Activated CD8-positive, alpha-beta T cell treated with anti-CD3 and anti-CD28 coated beads, Interleukin-2, amount 10 ng/mL, durations not matched to agents 7 days and 5 days (primary cell): ENCODE measurements at regions of chr10 and their contacts with region 1.

Region 1: GRCh38 chr10:88901206-88901983 is 21.4 kb downstream of the STAMBPL1 start:
- DNase-seq: no peak
- ATAC-seq: peak; percentile 40
- H3K4me3 Mint-ChIP-seq: no peak overlapping the region
- H3K27ac Mint-ChIP-seq: peak overlapping the region; percentile 53
- H3K4me1 Mint-ChIP-seq: peaks cover 49% of the 10 kb centered on the region
- H3K27me3 Mint-ChIP-seq: no peaks in the 10 kb centered on the region

Region 2: DNA sequence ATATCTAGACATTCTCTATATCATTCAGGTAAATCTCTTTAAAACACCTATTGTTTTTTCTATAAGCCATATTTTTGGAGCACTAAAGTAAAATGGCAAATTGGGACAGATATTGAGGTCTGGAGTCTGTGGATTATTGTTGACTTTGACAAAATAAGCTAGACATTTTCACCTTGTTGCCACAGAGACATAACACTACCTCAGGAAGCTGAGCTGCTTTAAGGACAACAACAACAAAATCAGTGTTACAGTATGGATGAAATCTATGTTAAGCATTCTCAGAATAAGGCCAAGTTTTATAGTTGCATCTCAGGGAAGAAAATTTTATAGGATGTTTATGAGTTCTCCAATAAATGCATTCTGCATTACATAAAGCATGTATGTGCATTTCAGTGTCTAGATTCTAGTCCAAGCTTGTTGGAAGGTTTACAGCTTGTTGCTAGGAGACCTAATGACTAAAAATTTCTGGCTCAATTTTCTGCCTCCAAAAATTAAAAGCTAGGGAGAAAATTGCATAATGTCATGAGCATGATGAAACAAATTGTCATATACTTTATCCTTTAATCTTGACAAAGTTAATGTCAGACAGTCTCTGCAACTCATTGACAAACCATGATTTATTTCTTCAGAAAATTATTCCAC is 80.5 kb before region 1 on chr10:
- CTCF ChIA-PET with region 1: no interaction called
- POLR2A ChIA-PET with region 1: no interaction called
- DNase-seq: no peak
- ATAC-seq: no peak
- H3K4me3 Mint-ChIP-seq: no peak overlapping the region
- H3K27ac Mint-ChIP-seq: no peak overlapping the region
- H3K4me1 Mint-ChIP-seq: peaks cover 23% of the 10 kb centered on the region
- H3K27me3 Mint-ChIP-seq: no peaks in the 10 kb centered on the region

Region 3: GRCh38 chr10:88870089-88870488 is 31.3 kb before region 1 on chr10:
- CTCF ChIA-PET with region 1: no interaction called
- POLR2A ChIA-PET with region 1: no interaction called
- DNase-seq: no peak
- ATAC-seq: no peak
- H3K4me3 Mint-ChIP-seq: no peak overlapping the region
- H3K27ac Mint-ChIP-seq: no peak overlapping the region
- H3K4me1 Mint-ChIP-seq: peaks cover 2% of the 10 kb centered on the region
- H3K27me3 Mint-ChIP-seq: no peaks in the 10 kb centered on the region

Region 4: GRCh38 chr10:88880282-88881076 is 20.9 kb before region 1 on chr10:
- CTCF ChIA-PET with region 1: interaction called, 19 read pairs
- POLR2A ChIA-PET with region 1: interaction called, 24 read pairs
- DNase-seq: peak; percentile 87
- ATAC-seq: peak; percentile 81
- H3K4me3 Mint-ChIP-seq: peak overlapping the region; percentile 98
- H3K27ac Mint-ChIP-seq: peak overlapping the region; percentile 98
- H3K4me1 Mint-ChIP-seq: peaks cover 70% of the 10 kb centered on the region
- H3K27me3 Mint-ChIP-seq: no peaks in the 10 kb centered on the region

Region 5: DNA sequence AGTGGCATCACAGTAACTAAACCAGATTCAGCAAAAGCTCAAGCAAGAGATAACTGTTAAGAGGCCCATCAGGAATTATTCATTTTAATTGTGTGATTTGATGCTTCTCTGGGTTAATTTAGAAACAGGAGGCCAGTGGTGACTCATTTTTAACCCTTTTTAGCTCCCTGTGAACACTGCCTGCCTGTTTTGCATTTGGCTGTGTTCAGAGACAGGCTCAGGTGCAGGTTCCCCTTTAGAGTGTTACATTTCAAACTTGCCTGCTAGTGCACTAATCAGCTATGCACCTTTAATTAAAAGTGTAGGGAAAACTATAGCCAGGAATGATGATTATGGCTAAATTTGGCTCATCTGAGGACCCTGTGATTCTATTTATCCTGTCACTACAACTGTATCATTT is 14.8 kb before region 1 on chr10:
- CTCF ChIA-PET with region 1: interaction called, 19 read pairs
- POLR2A ChIA-PET with region 1: interaction called, 24 read pairs
- DNase-seq: no peak
- ATAC-seq: no peak
- H3K4me3 Mint-ChIP-seq: no peak overlapping the region
- H3K27ac Mint-ChIP-seq: no peak overlapping the region
- H3K4me1 Mint-ChIP-seq: peaks cover 88% of the 10 kb centered on the region
- H3K27me3 Mint-ChIP-seq: no peaks in the 10 kb centered on the region

Region 6: GRCh38 chr10:88915781-88916180 is 14.4 kb after region 1 on chr10:
- CTCF ChIA-PET with region 1: no interaction called
- POLR2A ChIA-PET with region 1: no interaction called
- DNase-seq: no peak
- ATAC-seq: no peak
- H3K4me3 Mint-ChIP-seq: no peak overlapping the region
- H3K27ac Mint-ChIP-seq: peak overlapping the region; percentile 4
- H3K4me1 Mint-ChIP-seq: no peaks in the 10 kb centered on the region
- H3K27me3 Mint-ChIP-seq: no peaks in the 10 kb centered on the region

Region 7: DNA sequence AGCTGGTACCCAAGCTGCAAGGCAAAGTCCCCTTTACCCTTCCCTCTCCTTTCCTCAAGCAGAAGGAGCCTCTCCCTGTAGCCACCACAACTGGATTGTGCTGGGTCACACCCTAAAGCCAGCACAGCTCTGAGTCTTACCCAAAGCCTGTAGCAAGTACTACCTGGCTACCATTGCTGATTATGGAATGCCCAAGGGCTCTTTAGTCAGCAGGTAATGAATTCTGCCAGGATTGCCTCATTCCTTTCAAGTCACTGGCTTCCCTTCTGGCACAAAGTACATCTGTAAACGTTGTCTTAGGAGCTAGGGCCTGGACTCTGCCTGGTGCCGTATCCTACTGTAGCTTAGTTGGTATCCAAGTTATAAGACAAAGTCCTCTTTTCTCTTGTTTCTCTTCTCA is 141.2 kb after region 1 on chr10:
- CTCF ChIA-PET with region 1: no interaction called
- POLR2A ChIA-PET with region 1: no interaction called
- DNase-seq: no peak
- ATAC-seq: no peak
- H3K4me3 Mint-ChIP-seq: no peak overlapping the region
- H3K27ac Mint-ChIP-seq: no peak overlapping the region
- H3K4me1 Mint-ChIP-seq: no peaks in the 10 kb centered on the region
- H3K27me3 Mint-ChIP-seq: no peaks in the 10 kb centered on the region